ENCODE measurements at regions of chr12 and their contacts with region 1.

Region 1: DNA sequence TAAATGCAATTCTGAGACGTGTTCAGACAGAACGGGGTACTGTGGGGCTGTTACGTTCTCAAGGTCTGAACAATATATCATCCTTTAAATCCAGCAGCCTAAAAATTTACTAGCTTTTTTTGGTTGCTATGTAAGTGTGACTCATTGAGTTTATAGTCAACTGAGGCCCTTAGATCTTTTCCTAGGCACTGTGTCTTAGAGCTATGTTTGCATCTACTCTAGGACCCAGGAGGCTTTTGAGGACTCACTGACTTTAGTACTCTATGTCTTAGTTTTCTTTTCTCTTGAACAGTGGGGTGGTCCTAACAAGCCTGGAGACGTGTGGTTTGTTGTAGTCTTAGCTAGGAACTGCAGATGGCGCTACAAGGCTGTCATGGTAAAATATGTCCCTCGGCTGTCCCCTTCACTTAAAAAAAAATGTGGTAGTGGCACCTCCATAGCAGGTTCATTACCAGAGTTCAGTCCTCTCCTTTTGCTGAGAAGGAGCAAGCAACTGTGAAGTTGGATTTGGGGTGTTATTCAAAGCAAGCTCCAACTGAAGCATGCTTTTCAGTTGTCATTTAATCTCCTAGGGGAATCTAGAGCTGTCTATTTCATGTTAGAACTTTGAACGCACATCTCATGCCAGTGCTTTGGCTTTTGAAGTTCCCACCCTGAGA is 8.7 kb upstream of the SPATS2 start:
- DNase-seq: peak; percentile 32 to 69 (median 63)
- H3K4me3 ChIP-seq: no peak overlapping the region
- H3K4me3 Mint-ChIP-seq: no peak overlapping the region
- H3K27ac ChIP-seq: no peak overlapping the region
- H3K27ac Mint-ChIP-seq: peak overlapping the region in 1 of 8 donors; percentile 10
- H3K4me1 ChIP-seq: peaks cover 7% of the 10 kb centered on the region
- H3K4me1 Mint-ChIP-seq: peaks cover 2 to 4% (median 3%) of the 10 kb centered on the region in 3 donors
- H3K27me3 ChIP-seq: no peaks in the 10 kb centered on the region
- H3K27me3 Mint-ChIP-seq: peaks cover 14 to 43% of the 10 kb centered on the region in 2 donors

Region 2: DNA sequence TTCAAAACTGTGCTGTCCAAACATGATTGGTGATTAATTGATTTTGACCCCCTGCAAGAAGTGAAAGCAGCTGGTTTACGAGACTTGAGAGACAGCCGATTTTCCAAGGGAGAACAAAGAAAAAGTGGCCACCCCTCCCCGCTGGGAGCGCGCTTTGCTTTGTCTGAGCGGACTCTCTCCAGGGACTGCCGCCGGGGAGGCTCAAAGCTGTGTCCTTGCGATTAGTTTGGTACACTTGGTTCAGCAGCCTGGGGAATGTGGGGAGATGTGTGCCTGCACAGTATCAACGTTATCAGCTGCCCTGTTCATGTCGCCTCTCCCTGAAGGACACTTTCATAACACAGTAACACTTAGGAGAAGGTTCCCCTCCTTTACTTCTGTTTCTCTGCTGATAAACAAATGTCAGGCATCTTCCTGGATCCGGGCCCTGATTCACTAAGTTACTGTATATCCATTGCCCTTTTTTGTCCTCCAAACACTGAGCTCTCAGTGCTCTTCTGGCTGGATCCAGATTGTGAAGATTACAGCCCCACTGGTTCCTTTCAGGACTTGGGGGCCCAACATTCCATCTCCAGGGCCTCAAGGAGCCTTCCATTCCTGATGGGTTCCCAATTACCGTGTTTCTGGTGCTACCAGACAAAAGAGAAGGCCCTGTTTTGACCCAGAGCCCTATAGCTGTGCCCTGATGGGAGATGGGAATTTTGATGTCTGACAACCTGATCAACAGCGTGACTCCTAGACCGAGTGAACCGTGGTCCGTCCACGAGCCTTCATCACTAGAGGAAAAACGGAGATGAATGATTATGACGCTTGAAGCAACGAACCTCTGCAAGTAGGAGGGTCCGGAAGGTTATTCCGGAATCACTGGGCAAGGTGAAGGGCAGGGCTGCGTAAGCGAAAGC is 125.4 kb before region 1 on chr12:
- CTCF ChIA-PET with region 1: no interaction called
- POLR2A ChIA-PET with region 1: no interaction called
- DNase-seq: no peak
- H3K4me3 ChIP-seq: no peak overlapping the region
- H3K4me3 Mint-ChIP-seq: peak overlapping the region; percentile 27 to 84 (median 63)
- H3K27ac ChIP-seq: peak overlapping the region; percentile 66
- H3K27ac Mint-ChIP-seq: peak overlapping the region in 3 of 8 donors; percentile 38 to 73 (median 72)
- H3K4me1 ChIP-seq: peaks cover 5% of the 10 kb centered on the region
- H3K4me1 Mint-ChIP-seq: peaks cover 0 to 10% (median 4%) of the 10 kb centered on the region in 3 donors
- H3K27me3 ChIP-seq: no peaks in the 10 kb centered on the region
- H3K27me3 Mint-ChIP-seq: peaks cover 0 to 1% of the 10 kb centered on the region in 2 donors

Region 3: DNA sequence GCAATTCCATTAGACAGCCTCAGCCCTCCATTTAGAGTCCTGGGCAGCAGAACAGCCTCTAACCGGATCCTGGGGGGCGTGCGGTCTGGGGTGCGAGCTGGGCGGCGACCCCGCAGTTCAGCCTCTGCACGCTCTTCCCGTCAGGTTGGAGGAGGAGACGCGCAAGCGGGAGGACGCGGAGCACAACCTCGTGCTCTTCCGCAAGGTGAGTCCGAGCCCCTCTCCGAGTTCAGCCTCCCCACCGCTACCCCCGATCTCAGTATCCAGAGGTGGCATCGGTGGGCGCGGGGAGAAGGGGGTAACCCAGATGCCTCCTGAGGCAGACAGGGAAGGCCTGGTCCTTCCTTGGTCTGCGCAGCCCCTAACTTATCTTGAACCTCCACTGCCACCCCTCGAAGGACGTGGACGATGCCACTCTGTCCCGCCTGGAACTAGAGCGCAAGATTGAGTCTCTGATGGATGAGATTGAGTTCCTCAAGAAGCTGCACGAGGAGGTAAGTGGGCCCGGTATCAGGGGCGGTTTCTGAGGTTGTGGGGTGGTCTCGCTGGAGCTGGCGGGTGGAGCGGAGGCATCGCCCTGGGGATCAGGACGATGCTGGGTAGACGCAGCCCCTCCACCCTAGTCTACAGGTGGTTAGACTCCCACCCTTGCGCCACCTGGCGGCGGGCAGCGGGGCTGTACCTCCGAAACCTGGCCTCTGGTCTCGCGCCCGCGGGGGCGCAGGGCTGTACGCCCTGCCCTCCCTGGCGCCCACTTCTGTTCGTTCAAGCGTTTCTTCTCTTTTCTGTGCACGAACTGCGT is 62.4 kb before region 1 on chr12:
- CTCF ChIA-PET with region 1: interaction called, 29 read pairs
- POLR2A ChIA-PET with region 1: no interaction called
- DNase-seq: peak; percentile 43 to 70 (median 49)
- H3K4me3 ChIP-seq: peak overlapping the region; percentile 53
- H3K4me3 Mint-ChIP-seq: peak overlapping the region in 5 of 7 donors; percentile 58 to 86 (median 71)
- H3K27ac ChIP-seq: no peak overlapping the region
- H3K27ac Mint-ChIP-seq: no peak overlapping the region
- H3K4me1 ChIP-seq: peaks cover 13% of the 10 kb centered on the region
- H3K4me1 Mint-ChIP-seq: peaks cover 10 to 28% (median 14%) of the 10 kb centered on the region in 3 donors
- H3K27me3 ChIP-seq: peaks cover 39% of the 10 kb centered on the region
- H3K27me3 Mint-ChIP-seq: peaks cover 43 to 61% of the 10 kb centered on the region in 2 donors

Region 4: GRCh38 chr12:49347384-49348237 is 11.0 kb before region 1 on chr12:
- CTCF ChIA-PET with region 1: interaction called, 42 read pairs
- POLR2A ChIA-PET with region 1: interaction called, 3 read pairs
- DNase-seq: peak; percentile 71 to 85 (median 76)
- H3K4me3 ChIP-seq: peak overlapping the region; percentile 69
- H3K4me3 Mint-ChIP-seq: peak overlapping the region; percentile 66 to 94 (median 85)
- H3K27ac ChIP-seq: no peak overlapping the region
- H3K27ac Mint-ChIP-seq: no peak overlapping the region
- H3K4me1 ChIP-seq: peaks cover 45% of the 10 kb centered on the region
- H3K4me1 Mint-ChIP-seq: peaks cover 32 to 52% (median 39%) of the 10 kb centered on the region in 3 donors
- H3K27me3 ChIP-seq: peaks cover 55% of the 10 kb centered on the region
- H3K27me3 Mint-ChIP-seq: peaks cover 45 to 61% of the 10 kb centered on the region in 2 donors

Region 5: GRCh38 chr12:49515266-49515665 is 156.7 kb after region 1 on chr12:
- CTCF ChIA-PET with region 1: interaction called, 172 read pairs
- POLR2A ChIA-PET with region 1: no interaction called
- DNase-seq: no peak
- H3K4me3 ChIP-seq: no peak overlapping the region
- H3K4me3 Mint-ChIP-seq: no peak overlapping the region
- H3K27ac ChIP-seq: no peak overlapping the region
- H3K27ac Mint-ChIP-seq: no peak overlapping the region
- H3K4me1 ChIP-seq: no peaks in the 10 kb centered on the region
- H3K4me1 Mint-ChIP-seq: no peaks in the 10 kb centered on the region
- H3K27me3 ChIP-seq: no peaks in the 10 kb centered on the region
- H3K27me3 Mint-ChIP-seq: no peaks in the 10 kb centered on the region

Region 6: DNA sequence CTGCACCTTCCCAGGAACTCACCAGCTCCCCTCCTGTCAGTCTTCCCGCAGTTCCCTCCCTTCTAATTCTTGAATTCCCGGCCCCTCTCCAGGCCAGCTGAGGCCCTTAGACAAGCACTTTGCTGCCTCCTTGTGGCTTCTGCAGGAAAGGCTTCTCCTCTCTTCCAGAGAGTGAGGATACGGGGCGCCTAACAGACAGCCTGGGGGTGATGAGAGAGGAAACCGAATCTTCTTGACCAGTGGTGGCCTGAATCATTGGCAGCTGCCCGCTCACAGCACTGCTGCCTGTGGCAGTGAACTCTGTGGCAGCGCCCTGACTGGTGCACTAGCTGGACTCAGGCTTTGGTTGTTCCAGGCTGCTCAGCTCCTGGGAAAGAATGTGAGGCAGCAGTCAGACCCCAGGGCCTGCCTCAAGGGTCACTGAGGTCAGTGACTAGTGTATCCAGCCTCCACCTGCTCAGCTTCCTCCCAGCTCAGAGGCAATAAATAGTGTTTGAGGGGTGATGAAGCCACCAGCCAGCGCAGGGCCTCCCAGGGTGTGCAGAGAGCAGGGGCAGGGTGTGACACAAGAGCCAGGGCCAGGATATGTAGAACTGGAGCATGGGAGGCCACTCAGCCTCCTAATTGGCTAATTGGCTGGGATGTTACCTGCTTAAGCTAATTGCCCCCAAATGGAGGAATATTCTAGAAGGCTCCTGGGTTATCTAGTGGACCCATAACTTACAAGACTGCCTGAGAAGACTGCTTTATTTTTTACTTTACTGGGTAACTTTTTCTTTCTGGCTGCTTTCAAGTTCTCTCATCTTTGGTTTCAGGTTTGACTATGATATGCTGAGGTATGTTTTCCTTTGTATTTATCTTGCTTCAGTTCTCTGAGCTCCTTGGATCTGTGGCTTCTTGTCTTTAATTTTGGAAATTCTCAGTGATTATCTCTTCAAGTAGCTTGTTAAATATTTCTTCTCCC is 222.2 kb after region 1 on chr12:
- CTCF ChIA-PET with region 1: interaction called, 10 read pairs
- POLR2A ChIA-PET with region 1: no interaction called
- DNase-seq: peak; percentile 30 to 70 (median 32)
- H3K4me3 ChIP-seq: no peak overlapping the region
- H3K4me3 Mint-ChIP-seq: peak overlapping the region in 1 of 7 donors; percentile 20
- H3K27ac ChIP-seq: no peak overlapping the region
- H3K27ac Mint-ChIP-seq: peak overlapping the region in 1 of 8 donors; percentile 49
- H3K4me1 ChIP-seq: peaks cover 8% of the 10 kb centered on the region
- H3K4me1 Mint-ChIP-seq: peaks cover 5 to 14% (median 11%) of the 10 kb centered on the region in 3 donors
- H3K27me3 ChIP-seq: no peaks in the 10 kb centered on the region
- H3K27me3 Mint-ChIP-seq: no peaks in the 10 kb centered on the region